ENCODE measurements at regions of chr9 and their contacts with region 1.

Region 1: DNA sequence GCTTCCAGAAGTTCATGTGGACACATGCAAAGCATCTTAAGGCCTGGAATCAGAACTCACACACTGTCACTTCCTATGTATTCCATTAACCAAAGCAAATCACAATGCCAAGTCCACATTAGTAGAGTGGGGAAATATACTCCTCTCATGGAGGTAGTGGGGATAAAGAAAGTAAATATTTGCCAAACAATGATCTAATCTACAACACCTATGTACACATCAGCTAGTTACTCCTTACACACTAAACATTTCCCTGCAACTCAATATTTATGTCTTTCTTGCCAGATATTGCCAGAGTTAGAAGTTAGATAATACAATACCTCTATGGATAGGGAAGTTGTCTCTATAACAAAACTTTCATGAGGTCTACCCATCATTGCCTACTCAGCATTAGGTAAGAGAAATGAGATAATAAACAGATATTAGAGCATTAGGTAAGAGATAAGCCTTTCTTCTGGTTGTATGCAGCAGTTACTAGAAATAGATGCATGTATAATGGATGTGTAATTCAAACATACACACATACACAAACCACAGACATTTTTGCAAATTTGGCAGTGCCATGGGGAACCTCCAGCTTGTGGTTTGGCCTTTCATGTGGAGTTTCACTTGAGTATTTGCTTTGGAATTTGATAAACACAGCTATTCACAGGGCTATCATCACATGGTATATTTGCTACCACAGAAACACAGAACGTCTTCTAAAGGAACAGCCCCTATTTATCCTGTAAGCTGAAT is 196.5 kb downstream of the TLE1 start:
- DNase-seq: no peak
- ATAC-seq: no peak
- H3K4me3 ChIP-seq: no peak overlapping the region
- H3K27ac ChIP-seq: no peak overlapping the region
- H3K4me1 ChIP-seq: no peaks in the 10 kb centered on the region
- H3K27me3 ChIP-seq: no peaks in the 10 kb centered on the region
- CTCF ChIP-seq: no peak
- POLR2A ChIP-seq: no peak
- RAD21 ChIP-seq: no peak

Region 2: GRCh38 chr9:81529556-81530195 is 36.8 kb after region 1 on chr9:
- CTCF ChIA-PET with region 1: no interaction called
- POLR2A ChIA-PET with region 1: no interaction called
- RAD21 ChIA-PET with region 1: no interaction called
- intact Hi-C with region 1: no loop called
- DNase-seq: peak; percentile 7
- ATAC-seq: peak; percentile 58; the same call in 1 of the 2 replicates
- H3K4me3 ChIP-seq: no peak overlapping the region
- H3K27ac ChIP-seq: no peak overlapping the region
- H3K4me1 ChIP-seq: peaks cover 0 to 8% of the 10 kb centered on the region in 2 experiments; a peak in 2 of 4 replicates
- H3K27me3 ChIP-seq: no peaks in the 10 kb centered on the region
- CTCF ChIP-seq: no peak
- POLR2A ChIP-seq: no peak
- RAD21 ChIP-seq: no peak

Region 3: DNA sequence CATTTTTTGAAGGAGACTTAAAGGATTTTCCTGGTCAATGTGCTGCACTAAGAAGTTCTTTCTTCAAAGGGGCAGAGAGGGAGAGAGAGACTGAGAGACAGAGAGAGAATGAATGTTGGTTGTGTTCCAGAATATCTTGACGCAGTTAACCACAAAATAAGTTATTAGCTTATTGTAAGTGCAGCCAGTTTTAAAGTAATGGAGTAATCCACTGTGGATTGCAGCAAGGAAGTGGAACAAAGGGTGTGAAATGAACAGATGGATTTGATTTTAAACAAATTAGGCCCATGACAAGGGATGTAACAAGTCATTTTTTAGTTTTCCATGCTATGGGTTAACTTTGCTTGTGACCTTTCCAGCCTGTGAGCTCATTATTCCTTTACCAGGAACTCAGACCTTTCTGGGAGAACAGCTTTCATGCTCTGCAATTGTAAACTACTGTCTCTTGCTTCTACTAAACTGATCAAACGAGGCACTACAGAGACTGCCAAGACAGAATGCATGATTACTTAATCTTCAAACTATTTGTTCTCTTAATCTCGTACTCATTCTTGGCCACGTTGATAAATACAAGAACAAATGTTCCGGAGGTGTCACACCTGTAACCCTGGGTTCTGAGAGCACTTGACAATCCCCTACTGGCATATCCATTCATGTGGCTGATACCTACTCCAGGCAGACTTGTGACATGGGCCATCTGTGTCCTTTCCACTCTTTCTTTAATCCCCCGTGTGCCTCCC is 65.4 kb after region 1 on chr9:
- CTCF ChIA-PET with region 1: no interaction called
- POLR2A ChIA-PET with region 1: no interaction called
- RAD21 ChIA-PET with region 1: no interaction called
- intact Hi-C with region 1: loop called (anchors 10 kb)
- DNase-seq: no peak
- ATAC-seq: no peak
- H3K4me3 ChIP-seq: no peak overlapping the region
- H3K27ac ChIP-seq: 0 out of 2 replicates have a peak overlapping the region, but pooled peaks have one; percentile 6
- H3K4me1 ChIP-seq: peaks cover 38 to 67% of the 10 kb centered on the region in 2 experiments
- H3K27me3 ChIP-seq: no peaks in the 10 kb centered on the region
- CTCF ChIP-seq: no peak
- POLR2A ChIP-seq: no peak
- RAD21 ChIP-seq: no peak

Measured in HCT116 (cell line).